ENCODE measurements at regions of chr18 and their contacts with region 1.

Region 1: DNA sequence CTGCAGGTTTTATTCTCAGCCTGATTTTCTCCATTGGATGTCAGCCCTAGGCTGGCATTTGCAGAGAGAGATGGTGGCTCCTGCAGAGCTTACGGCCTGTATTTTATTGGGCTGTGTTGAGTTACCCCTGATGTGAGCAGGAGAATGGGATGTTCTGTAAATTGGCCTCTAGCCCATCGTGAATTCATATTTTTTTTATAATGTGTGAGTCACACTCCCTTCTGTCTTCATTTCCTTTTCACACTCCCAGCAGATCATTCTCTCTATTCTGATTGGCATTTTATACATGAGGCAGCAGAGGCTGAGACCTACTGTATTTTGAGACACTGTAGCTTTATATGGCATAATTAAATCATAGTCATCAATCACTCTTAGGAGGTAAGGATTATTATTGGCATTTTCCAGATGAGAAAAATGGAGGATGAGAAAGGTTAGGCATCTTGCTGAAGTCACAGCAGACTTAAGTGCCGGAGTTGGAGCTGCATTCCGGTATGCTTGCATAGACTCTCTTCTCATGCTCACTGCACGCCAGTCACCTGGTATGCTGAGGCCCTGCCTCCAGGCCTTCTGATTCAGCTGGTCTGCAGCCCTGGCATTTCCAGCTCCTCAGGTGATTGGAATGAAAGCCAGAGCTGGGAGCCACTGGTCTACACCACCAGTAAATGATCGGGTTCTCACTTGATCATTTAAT is 142.4 kb downstream of the NEDD4L start:
- DNase-seq: peak; percentile 78
- H3K4me3 Mint-ChIP-seq: peak overlapping the region; percentile 34
- H3K27ac Mint-ChIP-seq: peak overlapping the region; percentile 74
- H3K4me1 Mint-ChIP-seq: peaks cover 66% of the 10 kb centered on the region
- H3K27me3 Mint-ChIP-seq: no peaks in the 10 kb centered on the region
- CTCF ChIP-seq: no peak

Region 2: DNA sequence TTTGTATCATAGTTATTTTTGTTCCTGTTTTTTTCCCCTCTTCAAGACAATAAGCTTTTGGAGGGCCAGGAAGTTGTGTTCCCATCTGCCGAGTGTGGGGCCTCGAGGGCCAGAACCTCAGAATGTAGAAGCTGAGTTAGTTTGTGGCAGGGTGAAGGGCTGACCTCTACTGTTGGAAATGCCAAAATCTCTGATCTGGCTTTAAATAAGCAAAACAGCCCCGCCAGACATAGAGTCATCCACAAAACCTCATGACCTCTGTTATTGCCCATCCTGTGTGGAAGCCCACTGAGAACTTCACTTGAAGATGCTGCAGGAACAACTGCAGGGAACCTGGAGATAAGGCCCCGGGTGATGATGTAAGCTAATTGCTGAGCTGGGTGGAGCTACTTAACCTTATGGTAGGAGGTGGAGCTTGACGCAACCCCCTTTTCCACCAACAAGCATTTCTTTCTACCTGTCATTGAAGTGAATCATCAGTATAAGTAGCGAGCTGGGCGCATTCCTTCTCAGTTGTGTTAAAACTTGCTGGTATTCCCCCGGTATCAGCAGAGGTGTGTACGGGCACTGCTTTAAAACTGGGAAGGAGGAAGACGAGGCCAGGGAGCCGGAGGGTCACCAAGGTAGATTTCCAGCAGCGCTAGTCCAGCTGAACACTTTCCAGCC is 34.8 kb after region 1 on chr18:
- CTCF ChIA-PET with region 1: interaction called, 8 read pairs
- intact Hi-C with region 1: loop called (anchors 2 kb)
- DNase-seq: peak; percentile 79
- H3K4me3 Mint-ChIP-seq: peak overlapping the region; percentile 79
- H3K27ac Mint-ChIP-seq: peak overlapping the region; percentile 91
- H3K4me1 Mint-ChIP-seq: peaks cover 81% of the 10 kb centered on the region
- H3K27me3 Mint-ChIP-seq: no peaks in the 10 kb centered on the region
- CTCF ChIP-seq: no peak

Region 3: DNA sequence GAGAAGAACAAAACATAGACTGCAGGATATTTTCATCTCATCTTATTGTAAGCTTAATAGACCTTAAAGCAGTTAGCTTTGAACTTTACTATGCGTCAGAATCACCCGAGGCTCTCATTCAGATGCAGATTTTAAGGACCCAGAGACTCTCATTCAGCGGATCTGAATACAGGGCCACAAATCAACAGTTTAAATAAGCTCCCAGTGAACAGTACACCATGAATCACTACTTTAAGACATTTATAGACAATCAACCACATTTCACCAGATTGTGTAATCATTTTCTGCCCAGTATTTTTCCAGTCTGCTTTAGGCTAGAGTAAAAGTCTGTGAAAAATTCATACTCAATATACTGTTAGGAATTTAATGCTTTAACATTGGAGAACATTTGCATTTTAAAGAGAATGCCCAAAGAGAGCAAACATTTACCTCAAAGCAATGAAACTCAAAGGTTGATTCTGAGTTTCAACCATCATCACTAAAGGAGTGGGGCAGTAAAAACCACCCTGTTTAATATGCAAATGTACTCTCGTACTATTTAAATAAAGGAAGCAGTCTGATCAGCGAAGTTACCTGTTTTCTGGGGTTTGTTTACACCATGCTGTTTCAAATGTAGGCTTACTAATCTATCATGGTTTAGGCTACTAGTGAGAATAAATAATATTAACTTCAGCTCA is 453.5 kb after region 1 on chr18:
- CTCF ChIA-PET with region 1: no interaction called
- intact Hi-C with region 1: no loop called
- DNase-seq: no peak
- H3K4me3 Mint-ChIP-seq: no peak overlapping the region
- H3K27ac Mint-ChIP-seq: no peak overlapping the region
- H3K4me1 Mint-ChIP-seq: no peaks in the 10 kb centered on the region
- H3K27me3 Mint-ChIP-seq: no peaks in the 10 kb centered on the region
- CTCF ChIP-seq: no peak

Measured in Calu3 (cell line).